Activated CD4-positive, alpha-beta T cell treated with anti-CD3 and anti-CD28 coated beads for 36 hours (primary cell): ENCODE measurements at regions of chr1 and their contacts with region 1.

Region 1: GRCh38 chr1:203229471-203230135 is at the start of gene CHIT1:
- DNase-seq: no peak
- ATAC-seq: no peak
- H3K4me3 Mint-ChIP-seq: no peak within 1 kb of the TSS
- H3K27ac Mint-ChIP-seq: no peak within 1 kb of the TSS
- H3K4me1 Mint-ChIP-seq: no peaks in the 10 kb centered on the region
- H3K27me3 Mint-ChIP-seq: peaks cover 19% of the 10 kb centered on the region
- total RNA-seq, gene CHIT1: 0.63 to 0.80 TPM

Region 2: DNA sequence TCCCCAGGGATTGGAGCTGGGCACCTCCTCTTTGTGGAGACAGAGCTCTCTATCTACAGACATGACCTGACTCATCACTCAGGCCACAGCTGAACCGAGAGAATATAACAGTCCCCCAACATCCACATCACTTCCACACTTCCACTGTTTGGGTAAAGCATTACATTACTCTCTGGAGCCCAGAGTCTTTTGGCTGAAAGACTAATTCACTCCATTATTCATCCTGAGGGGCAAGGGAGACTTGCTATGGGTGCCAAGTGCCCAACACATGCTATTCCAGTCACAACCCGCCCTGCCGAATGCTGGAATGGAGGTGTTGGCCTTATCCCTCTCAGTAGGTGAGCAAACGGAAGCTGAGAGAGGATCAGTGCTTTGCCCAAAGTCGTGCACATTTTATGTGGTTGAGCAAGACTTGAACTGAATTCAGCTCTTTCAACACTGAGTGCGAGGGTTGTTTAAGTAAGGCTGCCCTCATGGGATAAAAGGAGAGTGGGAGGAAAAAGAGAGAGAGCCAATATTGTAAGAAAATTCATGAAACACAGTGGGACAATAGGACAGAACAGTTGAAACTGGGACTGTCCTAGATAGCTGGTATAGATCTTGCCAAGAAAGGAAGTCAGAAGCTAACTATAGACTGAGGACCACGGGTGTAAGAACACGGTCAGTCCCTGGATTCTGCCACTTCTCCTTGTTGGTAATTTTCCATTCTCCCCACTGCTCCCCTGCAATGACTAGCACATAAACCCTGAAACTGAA is 29.6 kb before region 1 on chr1:
- CTCF ChIA-PET with region 1: no interaction called
- POLR2A ChIA-PET with region 1: no interaction called
- intact Hi-C with region 1: loop called in 1 of 2 experiments (anchors 2 kb)
- DNase-seq: no peak
- ATAC-seq: no peak
- H3K4me3 Mint-ChIP-seq: no peak overlapping the region
- H3K27ac Mint-ChIP-seq: no peak overlapping the region
- H3K4me1 Mint-ChIP-seq: no peaks in the 10 kb centered on the region
- H3K27me3 Mint-ChIP-seq: peaks cover 10% of the 10 kb centered on the region